Gastrocnemius medialis (tissue), 4 donors: ENCODE measurements at regions of chr18 and their contacts with region 1.

Region 1: DNA sequence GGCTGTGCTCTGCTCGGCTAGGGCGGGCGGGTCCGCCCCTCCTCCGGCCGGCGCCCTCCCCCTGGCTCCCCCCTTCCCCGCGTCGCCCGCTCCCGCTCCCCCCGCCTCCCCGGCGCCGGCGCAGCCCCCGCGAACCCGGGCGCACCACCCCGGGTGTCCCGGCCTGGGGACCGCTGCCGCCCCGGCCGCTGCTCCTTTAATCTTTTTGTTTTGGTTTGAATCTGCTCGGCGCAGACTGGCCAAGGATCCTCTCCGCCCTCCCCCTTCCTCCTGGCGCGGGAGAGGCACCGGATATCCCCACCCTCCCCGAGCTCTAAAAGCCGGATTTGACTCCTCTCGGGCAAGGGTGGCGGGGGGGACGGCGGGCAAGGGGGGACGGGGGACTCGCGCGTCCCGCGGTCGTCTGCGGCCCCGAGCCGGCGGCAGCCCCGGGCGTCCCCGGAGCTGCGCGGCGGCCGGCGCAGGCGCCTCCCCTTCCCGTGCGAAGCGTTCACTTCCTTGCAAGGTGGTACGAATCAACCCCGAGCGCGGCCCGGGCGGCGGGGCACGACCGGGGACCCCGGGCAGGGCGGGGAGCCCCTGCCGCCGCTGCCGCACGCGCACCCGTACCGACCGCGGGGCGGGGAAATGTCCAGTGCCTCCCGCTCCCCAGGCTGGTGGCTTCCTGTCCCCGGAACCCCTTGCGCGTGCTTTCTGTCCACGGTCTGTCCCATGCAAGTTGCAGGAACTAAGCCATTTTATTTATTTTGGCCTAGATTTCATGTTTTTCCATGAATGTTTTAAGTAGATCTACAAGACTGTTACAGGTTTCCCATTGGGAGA is at the start of gene PTGR3:
- DNase-seq: peak; percentile 82 to 89
- ATAC-seq: peak; percentile 51 to 65
- H3K4me3 ChIP-seq: peak within 1 kb of the TSS; percentile 75 to 97 (median 87)
- H3K27ac ChIP-seq: peak within 1 kb of the TSS; percentile 95 to 99 (median 96)
- H3K4me1 ChIP-seq: peaks cover 48% of the 10 kb centered on the region in 2 donors
- H3K27me3 ChIP-seq: no peaks in the 10 kb centered on the region
- CTCF ChIP-seq: no peak
- POLR2A ChIP-seq: peak; percentile 60 to 75
- total RNA-seq, gene PTGR3: 25.7 to 34.0 (median 29.9) TPM

Region 2: DNA sequence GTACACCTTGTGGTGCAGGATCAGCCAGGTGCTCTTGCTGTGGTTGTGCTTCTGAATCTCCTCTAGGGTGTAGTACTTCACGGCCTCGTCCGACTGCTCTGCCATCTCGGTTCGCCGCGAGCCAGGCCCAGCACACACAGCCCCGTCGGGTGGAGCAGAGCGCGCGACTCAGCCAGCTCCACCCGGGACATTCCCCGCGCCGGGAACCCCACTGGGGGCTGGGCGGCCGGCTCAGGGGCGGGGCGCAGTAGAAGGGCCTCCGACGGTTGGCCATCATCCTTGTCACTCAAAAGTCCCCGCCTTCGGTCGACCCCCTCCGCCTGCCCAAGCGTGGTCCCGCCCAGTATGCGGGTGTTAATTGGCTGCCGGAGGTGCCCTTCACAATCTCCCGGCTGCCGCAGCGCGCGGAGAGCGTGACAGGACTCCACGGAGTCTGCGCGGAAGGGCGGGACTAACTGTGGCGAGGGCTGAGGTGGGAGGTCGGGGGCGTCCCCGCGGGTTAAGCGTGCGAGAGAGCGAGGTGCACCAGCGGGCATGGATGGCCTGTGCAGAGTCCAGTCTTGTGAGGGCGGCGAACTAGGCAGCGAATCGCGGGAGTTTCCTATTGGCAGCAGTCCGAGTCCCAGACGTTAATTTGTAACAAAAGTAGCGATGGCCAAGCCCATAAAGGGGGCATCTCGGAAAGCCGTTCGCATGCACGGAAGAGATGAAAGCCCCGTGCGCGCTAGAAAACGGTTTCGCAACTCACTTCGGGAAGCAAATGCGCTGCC is 917.4 kb before region 1 on chr18 and contains the start of gene CYB5A:
- in situ Hi-C with region 1: no loop called
- intact Hi-C with region 1: loop called (anchors 10 kb)
- DNase-seq: peak; percentile 97 to 98
- ATAC-seq: peak; percentile 99 to 100
- H3K4me3 ChIP-seq: peak within 1 kb of the TSS; percentile 75 to 96 (median 94)
- H3K27ac ChIP-seq: peak within 1 kb of the TSS; percentile 57 to 83 (median 70)
- H3K4me1 ChIP-seq: peaks cover 2 to 10% of the 10 kb centered on the region in 2 donors
- H3K27me3 ChIP-seq: no peaks in the 10 kb centered on the region
- CTCF ChIP-seq: no peak
- POLR2A ChIP-seq: no peak
- total RNA-seq, gene CYB5A: 21.4 to 29.4 (median 23.4) TPM

Region 3: DNA sequence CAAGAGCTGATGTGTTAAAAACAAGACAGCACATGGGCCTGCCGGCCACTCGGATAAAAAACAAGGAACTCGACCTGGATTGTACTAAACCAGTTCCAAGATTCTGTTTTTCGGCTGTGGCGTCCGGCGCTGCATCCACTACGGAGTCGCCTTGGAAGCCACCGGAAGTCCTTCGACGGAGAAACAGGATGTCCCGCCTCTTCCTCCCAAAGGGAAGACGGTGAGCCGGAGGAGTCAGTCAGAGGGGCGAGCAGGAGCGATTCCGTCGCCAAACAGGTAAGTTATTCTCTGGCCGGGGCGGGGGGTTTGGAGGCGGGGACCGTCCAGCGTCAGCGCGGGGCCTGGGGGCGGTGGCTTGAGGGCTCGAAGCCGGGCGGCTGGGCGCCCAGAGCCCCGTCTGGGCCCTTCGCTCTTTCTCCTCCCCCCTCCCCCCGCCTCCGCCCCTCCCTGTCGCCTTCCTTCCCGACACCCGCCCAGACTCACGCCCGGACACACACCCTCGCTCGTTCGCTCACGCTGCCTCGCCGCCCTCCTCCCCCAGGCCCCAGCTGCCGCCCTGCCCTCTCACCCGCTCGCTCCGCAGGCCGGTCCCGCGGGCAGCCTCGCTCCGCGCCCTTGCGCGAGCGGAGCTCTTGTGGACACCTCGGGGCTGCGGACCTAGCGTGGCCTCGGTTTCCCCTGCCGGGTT is 611.5 kb before region 1 on chr18 and contains the start of gene ZNF407:
- in situ Hi-C with region 1: no loop called
- intact Hi-C with region 1: loop called (anchors 10 kb)
- DNase-seq: peak; percentile 80 to 81
- ATAC-seq: peak; percentile 93
- H3K4me3 ChIP-seq: peak within 1 kb of the TSS; percentile 81 to 97 (median 94)
- H3K27ac ChIP-seq: peak within 1 kb of the TSS; percentile 91 to 98 (median 94)
- H3K4me1 ChIP-seq: peaks cover 39 to 42% of the 10 kb centered on the region in 2 donors
- H3K27me3 ChIP-seq: no peaks in the 10 kb centered on the region
- CTCF ChIP-seq: peak in 1 of 5 experiments; percentile 37
- POLR2A ChIP-seq: peak in 1 of 2 donors; percentile 3
- total RNA-seq, gene ZNF407: 5.9 to 11.4 (median 9.2) TPM

Region 4: DNA sequence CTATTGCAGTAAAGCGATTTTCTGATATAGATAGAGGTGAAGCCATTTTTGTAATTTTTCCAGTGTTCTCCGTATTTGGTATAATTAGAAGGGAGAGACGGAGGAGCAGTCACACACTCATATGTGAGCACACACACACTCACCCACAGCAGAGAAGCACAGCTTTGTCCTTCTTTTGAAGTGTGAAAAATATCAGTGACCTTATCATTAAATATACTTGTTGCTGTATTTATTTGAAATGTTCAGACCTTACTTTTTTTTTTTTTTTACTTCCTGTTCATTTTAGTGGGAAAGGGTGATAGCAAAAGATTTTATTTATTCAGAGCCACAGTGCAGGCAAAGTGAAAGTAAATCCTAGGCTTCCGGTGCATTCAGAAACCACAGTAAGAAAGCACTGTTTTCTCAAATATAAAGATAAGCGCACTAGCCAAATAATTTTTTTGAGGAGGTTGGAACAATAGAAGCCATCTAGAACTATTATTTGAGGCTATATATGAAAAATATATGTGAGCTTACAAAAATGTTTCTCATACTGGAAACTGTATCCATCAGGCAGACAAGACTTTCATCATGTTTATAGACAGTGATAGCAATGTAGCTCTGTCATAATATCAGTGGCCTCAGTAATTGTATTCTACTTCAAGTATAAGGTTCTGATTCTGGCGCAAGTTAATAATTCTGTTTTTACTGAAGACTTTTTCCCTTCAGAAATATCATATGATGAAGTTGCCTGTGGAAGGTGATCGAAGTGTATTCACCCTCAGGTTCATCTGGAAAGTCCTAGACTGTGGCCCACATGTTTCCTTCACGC is 38.5 kb after region 1 on chr18:
- in situ Hi-C with region 1: loop called in 1 of 4 experiments (anchors 5 kb)
- intact Hi-C with region 1: loop called (anchors 1 kb)
- DNase-seq: no peak
- ATAC-seq: peak; percentile 53 to 68
- H3K4me3 ChIP-seq: peak overlapping the region; percentile 48 to 58 (median 52)
- H3K27ac ChIP-seq: peak overlapping the region; percentile 74 to 77 (median 74)
- H3K4me1 ChIP-seq: peaks cover 41 to 48% of the 10 kb centered on the region in 2 donors
- H3K27me3 ChIP-seq: no peaks in the 10 kb centered on the region
- CTCF ChIP-seq: no peak
- POLR2A ChIP-seq: peak in 1 of 2 donors; percentile 7

Region 5: GRCh38 chr18:75422341-75422910 is 213.1 kb after region 1 on chr18:
- in situ Hi-C with region 1: no loop called
- intact Hi-C with region 1: no loop called
- DNase-seq: no peak
- ATAC-seq: no peak
- H3K4me3 ChIP-seq: no peak overlapping the region
- H3K27ac ChIP-seq: no peak overlapping the region
- H3K4me1 ChIP-seq: no peaks in the 10 kb centered on the region
- H3K27me3 ChIP-seq: no peaks in the 10 kb centered on the region
- CTCF ChIP-seq: no peak
- POLR2A ChIP-seq: no peak

Region 6: DNA sequence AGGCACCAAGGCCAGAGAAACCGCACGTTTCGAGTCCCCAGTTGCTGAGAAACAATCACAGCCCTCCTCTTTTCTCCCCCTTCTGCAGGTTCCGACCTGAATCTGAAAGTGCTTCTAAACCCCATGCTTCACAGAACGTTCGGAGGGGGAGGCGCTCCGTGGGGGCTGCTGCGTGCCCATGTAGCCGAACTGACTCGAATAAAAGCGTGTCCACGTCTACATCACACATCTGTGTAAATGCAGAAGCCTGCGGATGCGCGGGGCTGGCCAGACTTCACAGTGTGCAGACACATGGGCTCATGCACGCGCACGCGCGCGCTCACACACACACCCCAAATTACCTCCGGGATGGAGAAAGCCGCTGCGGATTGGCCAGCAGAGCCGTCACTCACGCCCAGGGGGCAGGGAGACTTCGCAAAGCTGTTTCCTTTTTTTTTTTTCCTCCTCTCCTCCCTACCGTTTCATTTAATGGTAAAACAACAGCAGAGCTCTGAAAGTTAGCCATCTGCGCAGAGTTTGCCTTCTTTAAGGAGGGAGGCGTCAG is 1283.4 kb after region 1 on chr18:
- in situ Hi-C with region 1: no loop called
- intact Hi-C with region 1: loop called (anchors 10 kb)
- DNase-seq: peak; percentile 98 to 99
- ATAC-seq: peak; percentile 64 to 67
- H3K4me3 ChIP-seq: peak overlapping the region; percentile 82 to 94 (median 86)
- H3K27ac ChIP-seq: peak overlapping the region; percentile 82 to 99 (median 96)
- H3K4me1 ChIP-seq: peaks cover 28 to 29% of the 10 kb centered on the region in 2 donors
- H3K27me3 ChIP-seq: no peaks in the 10 kb centered on the region
- CTCF ChIP-seq: no peak
- POLR2A ChIP-seq: peak; percentile 56 to 74